Dorsolateral prefrontal cortex (tissue), 120 donors: ENCODE measurements at regions of chr2 and their contacts with region 1.

Region 1: DNA sequence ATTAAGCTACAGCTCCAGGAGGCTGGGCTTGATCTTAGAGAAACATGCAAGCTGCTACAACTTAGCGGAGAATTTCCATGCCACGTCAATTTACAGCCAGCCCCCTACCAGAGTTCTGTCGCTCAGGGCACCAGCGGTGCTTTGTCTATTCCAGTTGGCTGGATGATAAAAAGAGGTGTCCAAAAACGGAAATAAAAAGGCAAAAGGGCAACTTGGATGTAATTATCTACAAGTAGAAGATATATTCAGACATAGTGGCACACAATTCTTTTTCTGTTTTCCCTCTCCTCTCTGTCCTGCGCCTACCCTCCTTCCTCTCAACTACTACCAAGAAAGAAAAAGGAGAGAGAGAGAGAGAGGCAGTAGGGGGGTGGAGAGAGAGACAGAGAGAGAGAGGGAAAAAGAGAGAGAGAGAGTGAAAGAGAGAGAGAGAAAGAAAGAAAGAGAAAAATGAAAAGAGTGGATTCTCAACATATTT is 363 bp upstream of the RFTN2 start:
- DNase-seq: peak in 3 of 10 donors; percentile 11 to 48 (median 21)
- H3K4me3 ChIP-seq: peak overlapping the region; percentile 38 to 81 (median 64)
- H3K27ac ChIP-seq: peak overlapping the region; percentile 44 to 100 (median 96)
- H3K27me3 ChIP-seq: peaks cover 0 to 4% (median 0%) of the 10 kb centered on the region in 45 donors
- CTCF ChIP-seq: peak in 5 of 56 donors; percentile 3 to 17 (median 11)

Region 2: DNA sequence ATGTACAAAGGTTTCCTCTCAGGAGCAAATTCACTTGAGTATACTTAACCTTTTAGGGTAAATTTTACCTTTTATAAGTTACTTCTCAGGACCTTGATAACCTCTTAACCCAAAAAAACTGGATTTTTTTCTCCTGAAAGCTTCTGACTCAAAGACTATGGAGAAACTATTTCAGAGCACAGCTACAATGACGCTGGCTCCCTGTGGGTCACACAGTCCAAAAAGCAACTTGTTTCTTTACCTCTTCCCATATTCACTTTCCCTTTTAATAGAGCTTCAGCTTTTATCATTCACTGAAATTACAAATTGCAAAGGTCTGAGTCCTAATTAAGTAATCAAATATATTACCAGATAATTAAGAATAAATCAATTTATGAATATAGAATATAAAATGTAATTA is 908.6 kb before region 1 on chr2:
- intact Hi-C with region 1: no loop called
- DNase-seq: no peak
- H3K4me3 ChIP-seq: no peak overlapping the region
- H3K27ac ChIP-seq: no peak overlapping the region
- H3K27me3 ChIP-seq: no peaks in the 10 kb centered on the region
- CTCF ChIP-seq: no peak

Region 3: GRCh38 chr2:197571627-197572271 is 104.0 kb before region 1 on chr2:
- intact Hi-C with region 1: no loop called
- DNase-seq: no peak
- H3K4me3 ChIP-seq: no peak overlapping the region
- H3K27ac ChIP-seq: peak overlapping the region in 45 of 59 donors; percentile 3 to 79 (median 37)
- H3K27me3 ChIP-seq: no peaks in the 10 kb centered on the region
- CTCF ChIP-seq: no peak

Region 4: DNA sequence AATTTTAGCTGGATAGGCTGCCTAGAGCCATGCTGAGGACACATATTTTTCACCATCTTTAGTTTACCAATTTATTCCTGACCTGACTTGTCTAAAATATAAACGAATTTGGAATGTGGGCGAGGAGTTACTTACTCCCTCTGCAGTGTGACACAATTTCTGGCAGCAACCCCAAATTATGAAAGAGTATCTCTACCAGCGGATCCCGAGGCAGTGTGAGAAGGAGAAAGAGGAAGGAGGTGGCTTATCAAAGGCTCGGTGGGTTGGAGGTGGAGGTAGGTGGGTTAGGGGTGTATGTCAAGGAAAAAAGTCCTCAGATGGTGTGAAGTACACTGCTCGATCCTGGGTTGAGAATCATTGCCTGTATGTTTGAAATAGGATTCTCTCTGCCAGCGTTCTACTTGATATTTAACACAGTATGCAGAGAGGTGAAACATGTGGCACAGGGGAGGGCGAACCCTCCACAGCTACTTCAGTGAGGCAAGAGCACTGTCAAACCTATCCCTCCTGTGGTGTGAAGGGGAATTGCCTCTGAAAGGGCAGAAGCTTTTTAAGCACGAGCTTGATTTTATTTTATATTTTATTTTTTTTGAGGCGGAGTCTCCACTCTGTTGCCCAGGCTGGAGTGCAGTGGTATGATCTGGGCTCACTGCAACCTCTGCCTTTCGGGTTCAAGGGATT is 76.3 kb before region 1 on chr2:
- intact Hi-C with region 1: no loop called
- DNase-seq: no peak
- H3K4me3 ChIP-seq: peak overlapping the region in 1 of 59 donors; percentile 0
- H3K27ac ChIP-seq: peak overlapping the region in 49 of 59 donors; percentile 2 to 84 (median 57)
- H3K27me3 ChIP-seq: no peaks in the 10 kb centered on the region
- CTCF ChIP-seq: peak in 32 of 56 donors; percentile 13 to 48 (median 26)

Region 5: GRCh38 chr2:197628043-197628500 is 47.7 kb before region 1 on chr2:
- intact Hi-C with region 1: loop called (anchors 2 kb)
- DNase-seq: peak in 9 of 10 donors; percentile 10 to 80 (median 53)
- H3K4me3 ChIP-seq: peak overlapping the region in 41 of 59 donors; percentile 1 to 55 (median 19)
- H3K27ac ChIP-seq: peak overlapping the region; percentile 70 to 99 (median 92)
- H3K27me3 ChIP-seq: no peaks in the 10 kb centered on the region
- CTCF ChIP-seq: peak in 2 of 56 donors; percentile 11 to 18